Pancreas (tissue), 10 donors: ENCODE measurements at regions of chr1 and their contacts with region 1.

Region 1: DNA sequence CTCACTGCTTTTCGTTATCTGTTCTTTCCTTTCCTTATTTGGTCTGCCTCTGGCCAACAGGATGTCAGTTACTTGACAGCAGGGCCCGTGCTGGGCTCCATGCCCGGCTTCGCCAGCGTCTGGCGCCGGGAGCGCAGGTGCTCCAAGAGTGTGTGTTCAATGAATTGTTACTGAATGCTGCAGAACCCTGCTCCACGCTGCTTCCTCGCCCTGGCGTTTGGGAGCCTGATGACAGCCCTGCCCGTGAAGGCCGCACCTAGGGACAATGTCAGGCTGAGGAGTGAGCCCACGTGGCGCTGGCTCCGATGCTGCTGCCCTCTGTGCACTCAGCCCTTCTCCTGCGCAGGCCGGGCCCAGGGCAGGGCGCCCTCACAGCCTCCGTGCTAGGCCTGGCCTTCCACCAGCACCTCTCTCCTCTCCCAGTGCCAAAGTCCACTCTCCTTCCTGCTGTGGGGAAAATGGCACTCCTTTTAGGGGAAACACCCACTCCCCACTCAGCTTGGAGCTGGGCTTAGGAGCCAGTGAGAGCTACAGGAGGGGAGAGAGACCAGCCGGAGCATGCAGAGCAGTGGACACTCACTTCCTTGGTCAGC is 51.4 kb downstream of the ACBD3 start:
- DNase-seq: peak; percentile 82 to 96 (median 88)
- ATAC-seq: peak; percentile 90 to 95 (median 94)
- H3K4me3 ChIP-seq: no peak overlapping the region
- H3K27ac ChIP-seq: peak overlapping the region; percentile 35 to 80 (median 45)
- H3K4me1 ChIP-seq: peaks cover 10 to 31% (median 16%) of the 10 kb centered on the region in 3 donors
- H3K27me3 ChIP-seq: no peaks in the 10 kb centered on the region
- CTCF ChIP-seq: no peak

Region 2: DNA sequence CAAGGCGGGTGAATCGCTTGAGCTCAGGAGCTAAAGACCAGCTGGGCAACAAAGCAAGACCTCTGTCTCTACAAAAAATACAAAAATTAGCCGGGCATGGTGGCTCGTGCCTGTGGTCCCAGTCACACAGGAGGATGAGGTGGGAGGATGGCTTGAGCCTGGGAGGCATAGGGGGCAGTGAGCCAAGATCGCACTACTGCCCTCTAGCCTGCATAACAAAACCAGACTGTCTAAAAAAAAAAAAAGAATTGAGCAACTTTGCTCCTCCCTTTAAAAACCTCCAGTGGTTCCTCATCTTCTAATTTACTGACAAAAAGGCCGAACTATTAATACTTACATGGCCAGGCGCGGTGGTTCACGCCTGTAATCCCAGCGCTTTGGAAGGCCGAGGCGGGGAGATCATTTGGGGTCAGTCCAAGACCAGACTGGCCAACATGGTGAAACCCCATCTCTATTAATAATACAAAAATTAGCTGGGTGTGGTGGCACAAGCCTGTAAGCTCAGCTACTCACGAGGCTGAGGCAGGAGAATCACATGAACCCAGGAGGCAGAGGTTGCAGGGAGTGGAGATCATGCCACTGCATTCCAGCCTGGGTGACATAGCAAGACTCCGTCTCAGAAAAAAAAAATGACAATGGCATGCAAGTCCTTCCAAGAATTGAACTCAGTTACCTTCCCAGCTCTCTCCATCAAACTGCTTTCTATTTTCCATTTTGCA is 47.0 kb after region 1 on chr1:
- intact Hi-C with region 1: loop called in 1 of 3 experiments (anchors 5 kb)
- DNase-seq: peak in 4 of 6 donors; percentile 29 to 61 (median 38)
- ATAC-seq: peak in 3 of 4 donors; percentile 47 to 54 (median 51)
- H3K4me3 ChIP-seq: no peak overlapping the region
- H3K27ac ChIP-seq: peak overlapping the region in 1 of 4 donors; percentile 23
- H3K4me1 ChIP-seq: peaks cover 16 to 30% (median 19%) of the 10 kb centered on the region in 3 donors
- H3K27me3 ChIP-seq: no peaks in the 10 kb centered on the region
- CTCF ChIP-seq: peak in 2 of 4 donors; percentile 12 to 18

Region 3: DNA sequence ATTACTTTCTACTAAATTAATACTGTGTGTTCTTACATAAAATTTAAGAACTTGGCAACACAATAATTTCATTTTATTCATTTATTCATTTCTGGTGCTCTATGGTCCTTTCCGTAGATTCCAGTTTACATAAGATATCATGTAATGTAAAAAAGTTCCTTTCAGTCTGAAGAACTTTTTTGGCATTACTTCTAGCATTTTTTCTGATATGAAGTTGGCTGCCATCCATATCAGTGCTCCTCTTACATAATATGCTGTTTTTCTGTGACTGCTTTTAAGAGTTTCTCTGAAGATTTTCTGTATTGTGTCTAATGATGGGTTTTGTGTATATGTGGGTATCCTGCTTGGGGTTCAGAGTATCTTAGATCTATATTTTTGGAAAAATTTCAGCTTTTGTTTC is 139.0 kb after region 1 on chr1:
- intact Hi-C with region 1: no loop called
- DNase-seq: peak in 1 of 6 donors; percentile 13
- ATAC-seq: peak; percentile 53 to 78 (median 66)
- H3K4me3 ChIP-seq: no peak overlapping the region
- H3K27ac ChIP-seq: no peak overlapping the region
- H3K4me1 ChIP-seq: peaks cover 0 to 5% (median 2%) of the 10 kb centered on the region in 3 donors
- H3K27me3 ChIP-seq: no peaks in the 10 kb centered on the region
- CTCF ChIP-seq: no peak